ENCODE measurements at regions of chr7 and their contacts with region 1.

Region 1: GRCh38 chr7:112869111-112869757 is 79.0 kb upstream of the TMEM168 start:
- DNase-seq: peak; percentile 59 to 81
- H3K4me3 ChIP-seq: no peak overlapping the region
- H3K27ac ChIP-seq: no peak overlapping the region
- H3K4me1 ChIP-seq: peaks cover 0 to 2% (median 0%) of the 10 kb centered on the region in 4 experiments; a peak in 1 of 7 replicates
- H3K27me3 ChIP-seq: no peaks in the 10 kb centered on the region
- CTCF ChIP-seq: peak; percentile 77 to 99 (median 97)
- EP300 ChIP-seq: 0 out of 3 replicates have a peak, but pooled peaks of 1 of the 2 experiments have one; percentile 5
- POLR2A ChIP-seq: no peak
- RAD21 ChIP-seq: peak; percentile 82 to 84

Region 2: GRCh38 chr7:112770084-112770483 is 99.2 kb before region 1 on chr7:
- CTCF ChIA-PET with region 1: no interaction called
- POLR2A ChIA-PET with region 1: no interaction called
- DNase-seq: no peak
- H3K4me3 ChIP-seq: no peak overlapping the region
- H3K27ac ChIP-seq: no peak overlapping the region
- H3K4me1 ChIP-seq: no peaks in the 10 kb centered on the region
- H3K27me3 ChIP-seq: no peaks in the 10 kb centered on the region
- CTCF ChIP-seq: no peak
- EP300 ChIP-seq: no peak
- POLR2A ChIP-seq: no peak
- RAD21 ChIP-seq: no peak

Region 3: DNA sequence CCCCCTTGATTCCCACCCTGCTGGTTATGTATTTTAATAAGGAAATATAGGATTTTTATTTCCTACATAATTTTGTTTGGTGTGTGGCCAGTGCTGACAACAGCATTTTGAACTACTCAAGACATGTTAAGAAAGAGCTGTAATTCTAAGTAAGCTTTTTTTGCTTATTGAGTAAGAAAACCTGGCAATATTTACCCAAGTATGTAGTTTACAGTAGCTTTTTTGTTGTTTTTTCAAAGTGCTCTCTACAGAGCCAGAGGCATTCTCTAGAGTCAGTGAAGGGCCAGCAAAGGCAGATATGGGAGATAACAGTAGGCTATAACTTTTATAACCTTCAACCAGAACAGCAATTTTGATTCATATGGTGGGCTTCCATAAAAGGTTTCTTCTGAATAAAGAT is 15.8 kb before region 1 on chr7:
- CTCF ChIA-PET with region 1: interaction called, 24 read pairs
- POLR2A ChIA-PET with region 1: no interaction called
- DNase-seq: no peak
- H3K4me3 ChIP-seq: no peak overlapping the region
- H3K27ac ChIP-seq: no peak overlapping the region
- H3K4me1 ChIP-seq: no peaks in the 10 kb centered on the region; a peak in 1 of 7 replicates
- H3K27me3 ChIP-seq: no peaks in the 10 kb centered on the region
- CTCF ChIP-seq: no peak
- EP300 ChIP-seq: no peak
- POLR2A ChIP-seq: no peak
- RAD21 ChIP-seq: no peak

Region 4: DNA sequence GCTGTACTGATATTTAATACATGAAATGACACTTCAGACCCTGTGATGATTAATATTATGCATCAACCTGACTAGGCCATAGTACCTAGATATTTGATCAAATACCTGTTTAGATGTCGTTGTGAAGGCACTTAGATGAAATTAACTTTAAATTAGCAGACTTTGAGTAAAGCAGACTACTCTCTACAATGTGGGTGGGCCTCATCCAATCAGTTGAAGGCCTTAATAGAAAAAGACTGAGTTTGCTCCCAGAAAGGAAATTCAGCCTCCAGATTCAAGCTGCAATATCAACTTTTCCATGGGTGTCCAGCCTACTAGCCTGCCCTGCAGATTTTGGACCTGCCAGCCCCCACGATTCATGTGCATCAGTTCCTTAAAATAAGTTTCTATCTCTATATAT is 10.4 kb before region 1 on chr7:
- CTCF ChIA-PET with region 1: interaction called, 24 read pairs
- POLR2A ChIA-PET with region 1: no interaction called
- DNase-seq: no peak
- H3K4me3 ChIP-seq: no peak overlapping the region
- H3K27ac ChIP-seq: no peak overlapping the region
- H3K4me1 ChIP-seq: no peaks in the 10 kb centered on the region
- H3K27me3 ChIP-seq: no peaks in the 10 kb centered on the region
- CTCF ChIP-seq: no peak
- EP300 ChIP-seq: no peak
- POLR2A ChIP-seq: no peak
- RAD21 ChIP-seq: no peak

Region 5: GRCh38 chr7:112880818-112881418 is 11.7 kb after region 1 on chr7:
- CTCF ChIA-PET with region 1: interaction called, 28 read pairs
- POLR2A ChIA-PET with region 1: no interaction called
- DNase-seq: no peak
- H3K4me3 ChIP-seq: no peak overlapping the region
- H3K27ac ChIP-seq: no peak overlapping the region
- H3K4me1 ChIP-seq: no peaks in the 10 kb centered on the region; a peak in 1 of 7 replicates
- H3K27me3 ChIP-seq: no peaks in the 10 kb centered on the region; a peak in 1 of 7 replicates
- CTCF ChIP-seq: no peak
- EP300 ChIP-seq: no peak
- POLR2A ChIP-seq: no peak
- RAD21 ChIP-seq: no peak

Region 6: DNA sequence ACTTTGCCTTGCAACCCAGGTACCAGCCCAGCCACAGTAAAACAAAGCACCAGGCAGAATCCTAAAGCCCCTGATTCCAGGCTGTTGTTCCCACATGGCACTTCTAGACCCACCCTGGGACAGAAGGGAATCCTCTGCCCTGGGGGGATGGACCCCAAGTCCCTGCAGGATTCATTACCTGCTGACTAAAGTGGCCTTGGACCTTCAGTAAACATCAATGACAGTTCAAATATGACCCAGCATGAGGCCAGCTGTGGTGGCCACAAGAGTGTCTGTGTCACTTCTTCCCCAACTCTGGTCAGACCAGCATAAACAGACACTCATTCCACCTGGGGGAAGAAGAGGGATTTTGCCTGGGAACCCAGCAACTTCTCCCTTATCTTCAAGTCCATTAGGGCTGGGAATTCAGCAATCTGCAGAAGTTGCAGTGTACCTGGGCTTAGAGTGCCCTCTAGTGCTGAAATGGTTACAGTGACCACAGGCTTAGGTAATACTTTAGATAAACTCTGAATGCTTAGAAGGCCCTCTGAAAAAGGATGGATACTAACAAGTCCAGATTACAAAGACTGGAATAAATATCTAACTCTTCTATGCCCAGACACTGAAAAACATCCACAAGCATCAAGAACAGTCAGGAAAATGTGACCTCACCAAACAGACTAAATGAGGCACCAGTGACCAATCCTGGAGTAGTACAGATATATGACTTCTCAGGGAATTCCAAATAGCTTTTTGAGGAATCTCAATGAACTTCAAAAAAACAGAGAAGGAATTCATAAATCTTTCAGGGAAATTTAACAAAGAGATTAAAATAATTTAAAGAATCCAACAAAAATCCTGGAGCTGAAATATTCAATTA is 29.4 kb after region 1 on chr7:
- CTCF ChIA-PET with region 1: interaction called, 11 read pairs
- POLR2A ChIA-PET with region 1: no interaction called
- DNase-seq: peak; percentile 15 to 62
- H3K4me3 ChIP-seq: no peak overlapping the region
- H3K27ac ChIP-seq: no peak overlapping the region; the same call in 1 of the 2 replicates
- H3K4me1 ChIP-seq: no peaks in the 10 kb centered on the region
- H3K27me3 ChIP-seq: no peaks in the 10 kb centered on the region
- CTCF ChIP-seq: peak in 2 of 3 experiments; percentile 80 to 86; a peak in 3 of 4 replicates
- EP300 ChIP-seq: no peak
- POLR2A ChIP-seq: no peak
- RAD21 ChIP-seq: peak; percentile 94 to 96

Region 7: GRCh38 chr7:112962813-112963212 is 93.6 kb after region 1 on chr7:
- CTCF ChIA-PET with region 1: no interaction called
- POLR2A ChIA-PET with region 1: no interaction called
- DNase-seq: no peak
- H3K4me3 ChIP-seq: no peak overlapping the region
- H3K27ac ChIP-seq: no peak overlapping the region
- H3K4me1 ChIP-seq: no peaks in the 10 kb centered on the region
- H3K27me3 ChIP-seq: no peaks in the 10 kb centered on the region
- CTCF ChIP-seq: no peak
- EP300 ChIP-seq: no peak
- POLR2A ChIP-seq: no peak
- RAD21 ChIP-seq: no peak

Measured in H1 (cell line).